Pancreas (tissue), 10 donors: ENCODE measurements at regions of chr13 and their contacts with region 1.

Region 1: DNA sequence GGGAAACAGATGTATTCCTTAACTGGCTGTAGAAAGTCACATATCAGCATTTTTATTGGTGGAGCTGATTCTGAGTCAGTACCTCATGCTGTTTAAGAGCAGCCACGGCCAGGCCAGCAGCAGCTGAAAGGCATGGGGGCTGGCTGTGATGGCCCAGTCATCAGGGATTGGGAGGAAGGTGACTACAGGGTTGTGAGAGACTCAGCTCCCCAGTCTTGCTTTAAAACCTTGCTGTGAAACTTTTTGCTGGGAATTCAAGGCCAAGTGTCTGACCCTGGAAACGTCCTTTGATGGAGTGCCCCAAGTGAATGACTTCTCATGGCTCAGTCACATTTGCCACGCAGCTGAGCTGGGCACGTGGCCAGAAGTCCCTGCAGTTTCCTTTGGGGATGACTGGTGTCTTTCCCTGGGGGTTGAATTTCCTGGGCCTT is 39.1 kb upstream of the RNF113B start:
- DNase-seq: peak in 5 of 6 donors; percentile 22 to 83 (median 53)
- ATAC-seq: peak; percentile 14 to 44 (median 32)
- H3K4me3 ChIP-seq: no peak overlapping the region
- H3K27ac ChIP-seq: peak overlapping the region in 1 of 4 donors; percentile 54
- H3K4me1 ChIP-seq: peaks cover 30 to 38% (median 33%) of the 10 kb centered on the region in 3 donors
- H3K27me3 ChIP-seq: no peaks in the 10 kb centered on the region
- CTCF ChIP-seq: no peak

Region 2: GRCh38 chr13:97834250-97834649 is 381.9 kb before region 1 on chr13:
- intact Hi-C with region 1: no loop called
- DNase-seq: no peak
- ATAC-seq: no peak
- H3K4me3 ChIP-seq: no peak overlapping the region
- H3K27ac ChIP-seq: no peak overlapping the region
- H3K4me1 ChIP-seq: no peaks in the 10 kb centered on the region
- H3K27me3 ChIP-seq: no peaks in the 10 kb centered on the region
- CTCF ChIP-seq: no peak

Region 3: GRCh38 chr13:98142380-98143156 is 73.6 kb before region 1 on chr13 and contains the start of gene FARP1:
- intact Hi-C with region 1: loop called in 1 of 3 experiments (anchors 10 kb)
- DNase-seq: peak; percentile 81 to 95 (median 90)
- ATAC-seq: peak; percentile 90 to 95 (median 90)
- H3K4me3 ChIP-seq: peak within 1 kb of the TSS; percentile 63 to 79 (median 70)
- H3K27ac ChIP-seq: peak within 1 kb of the TSS; percentile 72 to 87 (median 83)
- H3K4me1 ChIP-seq: peaks cover 18 to 23% (median 22%) of the 10 kb centered on the region in 3 donors
- H3K27me3 ChIP-seq: no peaks in the 10 kb centered on the region
- CTCF ChIP-seq: peak in 2 of 4 donors; percentile 9 to 25
- total RNA-seq, gene FARP1: 49.9 to 95.1 (median 63.8) TPM

Region 4: DNA sequence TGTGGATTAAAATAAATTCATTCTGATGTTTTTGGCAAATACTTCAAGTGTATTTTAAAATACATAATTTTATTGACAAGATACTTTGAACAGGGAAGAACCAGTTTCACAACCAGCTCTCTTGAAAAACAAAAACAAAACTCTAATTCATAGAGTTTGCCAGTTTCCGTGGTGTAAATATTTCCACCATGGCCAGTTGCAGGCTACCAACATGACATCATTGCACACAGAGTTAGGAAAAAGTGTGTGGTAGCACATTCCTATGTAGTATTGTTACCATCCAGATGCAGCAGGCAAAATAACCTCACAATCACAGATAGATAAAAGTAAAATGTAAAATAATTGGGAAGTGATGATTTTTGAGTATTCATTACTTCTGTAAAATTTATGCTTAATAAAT is 31.4 kb before region 1 on chr13:
- intact Hi-C with region 1: loop called in 1 of 3 experiments (anchors 5 kb)
- DNase-seq: no peak
- ATAC-seq: no peak
- H3K4me3 ChIP-seq: no peak overlapping the region
- H3K27ac ChIP-seq: no peak overlapping the region
- H3K4me1 ChIP-seq: peaks cover 3 to 14% (median 7%) of the 10 kb centered on the region in 3 donors
- H3K27me3 ChIP-seq: no peaks in the 10 kb centered on the region
- CTCF ChIP-seq: no peak